Aorta (tissue), 5 donors: ENCODE measurements at regions of chr5 and their contacts with region 1.

Region 1: DNA sequence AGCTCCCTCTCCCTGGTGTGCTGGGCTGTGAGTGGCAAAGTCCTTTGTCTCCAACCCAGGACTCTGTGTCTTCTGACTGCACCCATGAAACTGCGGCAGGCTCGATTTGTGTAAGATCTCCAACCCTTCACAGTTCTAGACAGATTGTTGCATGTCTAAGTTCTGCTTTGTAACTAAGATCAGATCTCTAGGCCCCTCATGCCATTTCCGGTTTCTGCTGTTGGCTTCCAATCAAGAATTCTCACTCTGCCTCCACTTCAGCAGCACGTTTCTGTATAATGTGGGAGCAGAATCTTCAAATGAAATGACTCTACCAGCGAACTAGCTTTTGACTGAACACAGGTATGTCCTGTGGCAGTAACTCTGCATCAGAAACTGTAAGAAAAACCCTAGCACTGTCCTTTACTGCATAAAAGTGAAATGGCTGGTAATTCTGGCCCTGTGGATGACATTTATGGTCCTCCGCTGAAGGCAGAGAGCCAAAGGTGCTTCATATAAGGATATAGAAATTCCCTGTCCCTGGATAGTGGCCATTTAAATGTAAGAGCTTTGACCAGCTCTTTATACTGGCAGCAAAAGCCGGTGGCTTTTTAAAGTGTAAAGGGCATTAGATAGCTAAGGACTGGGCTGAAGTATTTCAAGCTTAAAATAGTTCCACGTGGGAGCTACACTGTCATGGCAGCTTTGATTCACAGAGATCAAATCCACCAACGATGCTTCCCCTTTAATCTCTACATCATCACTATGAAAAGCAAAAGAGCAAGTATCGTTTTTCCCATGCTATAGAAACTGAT is 319.0 kb upstream of the CDH6 start:
- DNase-seq: no peak
- ATAC-seq: no peak
- H3K4me3 ChIP-seq: no peak overlapping the region
- H3K27ac ChIP-seq: no peak overlapping the region
- H3K4me1 ChIP-seq: no peaks in the 10 kb centered on the region
- H3K27me3 ChIP-seq: peaks cover 0 to 2% of the 10 kb centered on the region in 2 donors

Region 2: DNA sequence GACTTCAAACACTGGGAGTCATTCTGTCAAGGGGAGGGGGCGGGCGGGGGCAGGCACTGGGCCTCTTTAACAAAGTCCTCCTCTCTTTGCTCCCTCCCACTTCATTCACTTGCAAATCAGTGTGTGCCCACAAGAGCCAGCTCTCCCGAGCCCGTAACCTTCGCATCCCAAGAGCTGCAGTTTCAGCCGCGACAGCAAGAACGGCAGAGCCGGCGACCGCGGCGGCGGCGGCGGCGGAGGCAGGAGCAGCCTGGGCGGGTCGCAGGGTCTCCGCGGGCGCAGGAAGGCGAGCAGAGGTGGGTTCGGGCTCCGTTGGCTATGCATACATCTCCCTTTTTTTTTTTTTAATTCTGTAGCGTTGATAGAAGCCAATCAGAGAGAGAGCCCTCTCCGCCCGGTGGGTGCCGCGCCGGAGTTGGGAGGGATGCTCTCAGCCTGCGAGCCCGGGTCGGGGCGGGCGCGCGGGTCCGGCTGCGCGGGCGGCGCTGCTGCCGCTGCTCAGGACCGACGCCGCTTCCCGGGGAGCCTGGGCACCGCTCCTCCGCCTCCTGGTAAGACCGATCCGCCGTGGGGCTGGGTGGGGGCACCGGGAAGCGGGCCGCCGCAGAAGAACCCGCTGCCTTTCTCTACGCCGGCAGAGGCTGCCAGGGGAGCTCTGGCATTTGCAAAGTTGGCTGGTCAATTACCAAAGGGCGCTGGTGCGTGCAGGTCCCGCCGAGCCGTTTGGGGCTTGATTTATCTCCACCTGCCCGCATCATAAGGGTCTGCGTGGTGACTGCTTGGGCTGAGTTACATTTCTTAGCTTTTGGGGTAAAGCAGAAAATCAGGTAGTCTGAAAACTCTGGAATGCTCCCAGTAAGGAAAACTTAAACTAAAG is 319.4 kb after region 1 on chr5 and contains the start of gene CDH6:
- intact Hi-C with region 1: loop called in 1 of 2 experiments (anchors 10 kb)
- DNase-seq: peak; percentile 55 to 80
- ATAC-seq: peak; percentile 66
- H3K4me3 ChIP-seq: peak within 1 kb of the TSS; percentile 45 to 62
- H3K27ac ChIP-seq: no peak within 1 kb of the TSS
- H3K4me1 ChIP-seq: peaks cover 0 to 2% of the 10 kb centered on the region in 2 donors
- H3K27me3 ChIP-seq: no peaks in the 10 kb centered on the region
- total RNA-seq, gene CDH6: 5.2 to 10.7 TPM